ENCODE measurements at regions of chr7 and their contacts with region 1.

Region 1: DNA sequence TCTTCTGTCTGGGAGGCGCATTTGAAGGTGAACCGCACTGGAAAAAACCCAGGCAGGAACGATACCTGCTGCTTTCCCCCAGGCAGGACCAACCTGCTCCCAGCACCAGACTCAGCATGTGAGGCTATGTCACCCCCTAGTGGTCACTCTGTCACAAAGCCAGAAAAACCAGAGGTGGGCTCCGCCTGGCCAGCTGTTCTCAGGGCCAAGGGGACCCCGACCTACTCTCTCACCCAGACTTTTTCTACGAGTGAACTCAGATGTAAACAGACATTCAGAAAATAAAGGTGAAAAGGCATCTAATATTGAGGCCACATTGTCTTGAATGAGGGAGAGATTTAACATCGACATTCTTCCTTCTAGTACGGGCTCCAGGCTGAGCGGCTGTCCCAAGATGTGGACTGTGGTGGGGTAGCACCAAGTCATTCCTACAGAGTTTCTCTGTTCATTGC is 117.3 kb downstream of the PRKAG2 start:
- DNase-seq: no peak

Region 2: GRCh38 chr7:151368136-151368571 is 391.5 kb before region 1 on chr7:
- intact Hi-C with region 1: loop called (anchors 5 to 10 kb)
- DNase-seq: peak; percentile 94

Region 3: DNA sequence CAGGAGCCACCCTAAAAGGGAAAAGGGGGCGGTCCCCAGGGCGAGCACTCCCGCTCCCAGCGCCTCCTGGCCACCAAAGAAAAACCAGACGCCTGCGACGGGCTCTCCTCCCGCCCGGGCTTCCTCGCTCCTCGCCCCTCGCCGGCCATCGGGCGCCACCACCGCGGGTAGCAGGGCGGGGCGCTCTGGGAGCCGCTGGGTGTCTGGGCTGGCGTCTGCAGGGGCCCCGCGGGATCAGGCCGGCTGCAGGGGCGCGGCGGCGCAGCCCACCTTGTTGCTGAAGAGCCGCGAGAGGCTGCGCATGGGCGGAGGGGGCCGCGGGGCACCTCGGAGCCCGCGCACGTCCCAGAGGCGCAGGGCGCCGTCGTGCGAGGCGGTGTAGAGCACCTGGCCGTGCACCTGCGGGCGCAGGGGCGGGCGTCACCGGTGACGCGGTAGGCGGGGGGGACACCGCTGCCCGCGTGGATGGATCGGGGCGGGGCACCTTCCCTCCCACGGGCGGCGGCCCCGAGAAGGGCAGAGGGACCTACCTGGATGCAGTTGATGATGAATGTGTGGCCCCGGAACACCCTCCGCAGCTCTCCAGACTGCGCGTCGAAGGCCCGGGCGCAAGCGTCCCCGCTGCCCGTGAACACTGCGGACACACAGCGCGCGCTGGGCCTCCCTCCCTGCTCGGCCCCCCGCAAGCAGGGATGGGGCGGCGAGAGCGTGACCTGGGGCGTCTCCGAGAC is 378.1 kb before region 1 on chr7:
- intact Hi-C with region 1: loop called in 1 of 2 experiments (anchors 10 kb)
- DNase-seq: peak; percentile 66

Region 4: DNA sequence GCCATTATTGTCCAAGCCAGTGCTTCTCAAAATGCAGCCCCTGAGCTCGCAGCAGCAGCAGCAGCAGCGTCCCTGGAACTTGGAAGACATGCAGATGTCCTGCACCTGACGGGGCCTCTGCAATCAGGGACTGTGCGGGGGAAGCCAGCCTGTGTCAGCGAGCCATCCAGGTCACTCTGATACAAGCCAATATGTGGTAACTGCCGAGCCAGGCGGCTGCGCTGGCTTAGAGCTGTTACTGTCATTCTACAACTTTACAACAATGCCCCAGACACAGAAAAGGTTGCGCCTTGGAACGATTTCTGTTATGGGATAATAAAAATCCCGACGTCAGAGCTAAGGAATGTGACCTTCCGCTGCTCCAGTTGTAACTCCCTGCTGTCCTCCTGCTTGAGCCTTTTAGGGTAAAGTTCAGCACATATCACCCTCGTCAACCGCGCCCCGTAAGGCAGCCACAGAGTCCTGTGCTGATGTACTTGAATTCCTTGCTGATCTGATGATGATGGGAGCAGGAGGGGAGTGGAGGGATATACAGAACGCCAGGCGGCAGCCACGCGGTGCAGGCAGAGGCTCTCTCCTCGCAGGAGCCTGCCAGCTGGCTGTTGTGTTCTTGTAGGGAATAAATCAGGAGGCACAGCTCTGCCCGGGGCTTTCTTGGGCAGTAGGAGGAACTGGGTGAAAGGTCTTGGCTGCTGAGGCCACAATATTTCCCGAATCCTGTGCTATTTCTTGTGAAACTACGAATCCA is 299.7 kb before region 1 on chr7:
- intact Hi-C with region 1: loop called in 1 of 2 experiments (anchors 10 kb)
- DNase-seq: peak; percentile 94

Region 5: DNA sequence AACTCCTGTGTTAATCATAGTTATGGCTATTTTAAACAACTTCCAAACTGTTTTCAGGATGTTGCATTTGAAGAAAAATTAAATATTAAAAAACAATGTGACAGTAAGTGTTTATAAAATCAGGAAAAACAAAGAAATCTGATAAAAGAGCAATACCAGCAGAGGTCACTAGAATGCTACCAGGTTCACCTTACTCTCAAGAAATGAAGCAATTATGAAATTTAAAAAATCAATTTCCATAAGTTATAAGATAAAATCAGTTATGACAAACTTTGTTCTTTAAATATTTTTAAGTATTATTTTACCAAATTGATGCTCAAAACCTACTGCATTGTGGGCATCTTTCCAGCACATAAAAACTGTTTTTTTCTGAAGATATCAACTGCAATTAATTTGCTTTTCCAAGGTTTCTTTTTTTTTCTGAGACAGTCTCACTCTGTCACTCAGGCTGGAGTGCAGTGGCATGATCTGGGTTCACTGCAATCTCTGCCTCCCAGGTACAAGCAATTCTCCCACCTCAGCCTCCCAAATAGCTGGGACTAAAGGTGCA is 189.2 kb before region 1 on chr7:
- intact Hi-C with region 1: loop called in 1 of 2 experiments (anchors 5 kb)
- DNase-seq: no peak

Region 6: DNA sequence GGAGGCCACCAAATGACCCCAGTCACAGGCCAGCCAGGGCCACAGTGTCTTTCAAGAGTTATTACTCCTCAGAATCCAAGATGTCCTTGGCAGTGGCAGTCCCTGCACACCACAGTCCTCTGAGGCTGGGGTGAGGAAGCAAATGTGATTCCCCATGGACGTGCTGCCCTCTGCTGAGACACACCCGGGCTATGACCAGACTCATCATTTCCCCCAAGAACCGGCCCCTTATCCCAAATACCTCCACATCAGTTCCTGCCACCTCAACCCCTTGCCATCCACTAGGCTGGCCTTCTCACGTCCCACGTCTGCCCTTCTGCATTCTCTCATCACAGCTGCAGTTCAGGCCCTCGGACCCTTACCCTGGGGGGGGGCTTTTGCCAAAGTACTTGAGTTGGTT is 112.3 kb after region 1 on chr7:
- intact Hi-C with region 1: no loop called
- DNase-seq: no peak

Measured in posterior vena cava (tissue), 2 donors.